ENCODE measurements at regions of chr11 and their contacts with region 1.

Region 1: GRCh38 chr11:62860835-62861563 is 19.7 kb upstream of the SLC3A2 start:
- DNase-seq: no peak
- H3K4me3 ChIP-seq: no peak overlapping the region
- CTCF ChIP-seq: no peak

Region 2: GRCh38 chr11:62875698-62876478 is 14.9 kb after region 1 on chr11:
- CTCF ChIA-PET with region 1: interaction called, 38 read pairs
- POLR2A ChIA-PET with region 1: interaction called, 27 read pairs
- DNase-seq: no peak
- H3K4me3 ChIP-seq: no peak overlapping the region
- CTCF ChIP-seq: no peak

Region 3: DNA sequence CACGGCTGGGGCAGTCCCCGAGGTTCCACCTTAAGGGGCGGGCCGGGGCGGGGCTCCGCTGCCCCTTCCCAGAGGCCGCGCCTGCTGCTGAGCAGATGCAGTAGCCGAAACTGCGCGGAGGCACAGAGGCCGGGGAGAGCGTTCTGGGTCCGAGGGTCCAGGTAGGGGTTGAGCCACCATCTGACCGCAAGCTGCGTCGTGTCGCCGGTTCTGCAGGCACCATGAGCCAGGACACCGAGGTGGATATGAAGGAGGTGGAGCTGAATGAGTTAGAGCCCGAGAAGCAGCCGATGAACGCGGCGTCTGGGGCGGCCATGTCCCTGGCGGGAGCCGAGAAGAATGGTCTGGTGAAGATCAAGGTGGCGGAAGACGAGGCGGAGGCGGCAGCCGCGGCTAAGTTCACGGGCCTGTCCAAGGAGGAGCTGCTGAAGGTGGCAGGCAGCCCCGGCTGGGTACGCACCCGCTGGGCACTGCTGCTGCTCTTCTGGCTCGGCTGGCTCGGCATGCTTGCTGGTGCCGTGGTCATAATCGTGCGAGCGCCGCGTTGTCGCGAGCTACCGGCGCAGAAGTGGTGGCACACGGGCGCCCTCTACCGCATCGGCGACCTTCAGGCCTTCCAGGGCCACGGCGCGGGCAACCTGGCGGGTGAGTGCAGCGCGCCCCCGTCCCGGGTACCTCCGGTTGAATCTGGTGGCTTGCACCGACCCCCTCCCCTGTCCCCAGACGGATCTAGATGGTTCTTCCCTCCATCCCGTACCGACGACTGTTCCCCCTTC is 20.0 kb after region 1 on chr11 and contains the start of gene SLC3A2:
- CTCF ChIA-PET with region 1: interaction called, 38 read pairs
- POLR2A ChIA-PET with region 1: interaction called, 27 read pairs
- DNase-seq: no peak
- H3K4me3 ChIP-seq: peak within 1 kb of the TSS; percentile 100
- CTCF ChIP-seq: peak; percentile 86

Region 4: DNA sequence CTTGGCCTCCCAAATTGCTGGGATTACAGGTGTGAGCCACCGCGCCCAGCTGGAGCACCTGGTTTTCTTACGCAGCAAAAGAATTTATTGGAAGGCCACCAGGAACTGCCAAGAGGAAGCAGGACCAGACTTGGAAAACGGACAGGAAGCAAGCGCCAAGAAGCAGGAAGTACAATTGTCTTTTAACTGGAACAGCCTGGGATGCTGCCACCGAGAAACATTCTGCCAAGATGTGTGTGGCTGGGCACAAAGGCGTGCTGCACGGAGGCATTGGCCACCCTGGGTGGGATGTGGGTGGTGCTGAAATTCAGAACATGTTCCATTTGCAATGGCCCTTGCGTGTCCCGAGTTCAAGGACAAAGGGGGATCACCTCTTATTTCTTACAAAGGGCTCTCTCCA is 35.0 kb after region 1 on chr11:
- CTCF ChIA-PET with region 1: no interaction called
- POLR2A ChIA-PET with region 1: no interaction called
- DNase-seq: no peak
- H3K4me3 ChIP-seq: no peak overlapping the region
- CTCF ChIP-seq: no peak